Naive thymus-derived CD4-positive, alpha-beta T cell (primary cell): ENCODE measurements at regions of chr17 and their contacts with region 1.

Region 1: DNA sequence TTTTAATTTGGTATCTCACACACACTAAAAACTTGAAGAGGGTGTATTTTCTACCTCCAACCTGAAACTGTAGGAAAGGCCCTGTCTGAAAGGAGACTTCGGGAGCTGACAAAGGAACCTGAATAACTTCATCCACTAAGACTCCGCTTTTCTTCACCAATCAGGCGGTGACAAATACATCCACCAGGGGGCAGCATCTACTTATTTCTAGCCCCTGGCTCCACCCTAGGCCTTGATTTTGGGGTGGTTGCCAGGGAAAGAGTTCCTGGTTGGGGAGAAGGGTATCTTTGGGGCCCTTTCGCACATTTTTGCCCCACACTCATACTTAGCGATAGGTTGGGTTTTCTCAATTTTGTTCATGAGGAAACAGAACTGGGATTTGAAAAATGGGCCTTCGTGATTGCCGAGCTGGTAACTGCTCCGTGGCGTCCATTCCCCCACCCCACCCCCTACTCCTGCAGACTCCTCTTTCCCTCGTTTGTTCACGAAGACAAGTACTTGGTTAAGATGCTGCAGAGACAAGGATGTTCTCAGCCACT is 4.8 kb upstream of the ARL4D start:
- DNase-seq: peak; percentile 63 to 89 (median 85)
- ATAC-seq: peak; percentile 61
- H3K4me3 ChIP-seq: no peak overlapping the region
- H3K4me3 Mint-ChIP-seq: peak overlapping the region in 7 of 10 donors; percentile 1 to 47 (median 35)
- H3K27ac ChIP-seq: no peak overlapping the region
- H3K27ac Mint-ChIP-seq: peak overlapping the region in 8 of 9 donors; percentile 5 to 69 (median 42)
- H3K4me1 ChIP-seq: peaks cover 9 to 18% of the 10 kb centered on the region in 2 donors
- H3K4me1 Mint-ChIP-seq: peaks cover 5 to 49% (median 39%) of the 10 kb centered on the region in 7 donors
- H3K27me3 ChIP-seq: no peaks in the 10 kb centered on the region
- H3K27me3 Mint-ChIP-seq: no peaks in the 10 kb centered on the region

Region 2: DNA sequence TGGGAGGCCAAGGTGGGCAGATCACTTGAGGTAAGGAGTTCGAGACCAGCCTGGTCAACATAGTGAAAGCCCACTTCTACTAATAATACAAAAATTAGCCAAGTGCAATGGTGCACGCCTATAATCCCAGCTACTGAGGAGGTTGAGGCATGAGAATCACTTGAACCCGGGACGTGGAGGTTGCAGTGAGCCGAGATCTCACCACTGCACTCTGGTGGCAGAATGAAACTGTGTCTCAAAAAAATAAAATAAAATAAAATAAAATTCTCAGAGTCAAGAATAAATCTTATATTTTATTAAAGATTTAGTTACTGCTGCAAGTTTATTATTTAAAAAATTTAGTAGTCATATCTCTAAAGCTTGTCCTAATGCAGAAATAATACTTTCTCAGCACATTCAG is 34.5 kb after region 1 on chr17:
- CTCF ChIA-PET with region 1: no interaction called
- POLR2A ChIA-PET with region 1: no interaction called
- intact Hi-C with region 1: loop called in 1 of 2 experiments (anchors 1 kb)
- DNase-seq: no peak
- ATAC-seq: no peak
- H3K4me3 ChIP-seq: no peak overlapping the region
- H3K4me3 Mint-ChIP-seq: no peak overlapping the region
- H3K27ac ChIP-seq: no peak overlapping the region
- H3K27ac Mint-ChIP-seq: no peak overlapping the region
- H3K4me1 ChIP-seq: no peaks in the 10 kb centered on the region
- H3K4me1 Mint-ChIP-seq: peaks cover 0 to 2% (median 0%) of the 10 kb centered on the region in 7 donors
- H3K27me3 ChIP-seq: no peaks in the 10 kb centered on the region
- H3K27me3 Mint-ChIP-seq: peaks cover 5 to 32% (median 11%) of the 10 kb centered on the region in 5 donors

Region 3: DNA sequence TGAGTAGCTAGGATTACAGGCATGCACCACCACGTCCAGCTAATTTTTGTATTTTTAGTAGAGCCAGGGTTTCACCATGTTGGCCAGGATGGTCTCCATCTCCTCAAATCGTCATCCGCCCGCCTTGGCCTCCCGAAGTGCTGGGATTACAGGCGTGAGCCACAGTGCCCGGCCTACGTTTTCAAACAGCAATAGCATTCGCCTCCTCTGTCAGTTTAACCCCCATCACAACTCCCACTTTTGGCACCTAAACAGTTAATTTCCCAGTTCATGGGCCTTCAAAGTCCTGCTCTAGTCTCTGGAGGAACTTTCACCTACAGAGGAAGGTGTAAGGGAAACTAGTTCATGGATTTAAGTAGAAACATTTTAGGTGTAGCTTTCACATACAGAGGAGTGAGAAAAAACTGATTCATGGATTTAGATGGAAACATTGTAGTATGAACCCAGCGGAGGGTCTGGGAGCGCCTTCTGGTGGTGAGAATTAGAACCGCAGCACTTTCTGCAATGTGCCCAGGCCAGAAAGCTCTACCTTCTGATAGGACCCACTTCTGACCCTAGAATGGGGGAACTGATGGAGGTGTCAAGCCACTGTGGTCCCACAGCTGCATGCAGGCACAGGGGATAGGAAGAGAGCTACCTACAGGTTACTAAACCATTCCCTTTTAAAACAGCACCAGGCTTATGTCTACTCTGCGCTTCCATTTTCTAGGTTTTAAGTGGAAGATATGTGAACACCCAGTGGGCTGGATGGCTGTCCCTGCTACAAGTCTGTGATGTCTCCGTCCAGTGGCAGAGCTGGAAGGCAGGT is 279.7 kb after region 1 on chr17:
- CTCF ChIA-PET with region 1: no interaction called
- POLR2A ChIA-PET with region 1: no interaction called
- intact Hi-C with region 1: loop called in 1 of 2 experiments (anchors 2 kb)
- DNase-seq: peak; percentile 31 to 71 (median 59)
- ATAC-seq: peak; percentile 74
- H3K4me3 ChIP-seq: no peak overlapping the region
- H3K4me3 Mint-ChIP-seq: no peak overlapping the region
- H3K27ac ChIP-seq: no peak overlapping the region
- H3K27ac Mint-ChIP-seq: peak overlapping the region in 2 of 9 donors; percentile 38 to 40
- H3K4me1 ChIP-seq: no peaks in the 10 kb centered on the region
- H3K4me1 Mint-ChIP-seq: peaks cover 8 to 32% (median 15%) of the 10 kb centered on the region in 7 donors
- H3K27me3 ChIP-seq: no peaks in the 10 kb centered on the region
- H3K27me3 Mint-ChIP-seq: peaks cover 0 to 9% (median 3%) of the 10 kb centered on the region in 5 donors